Naive thymus-derived CD4-positive, alpha-beta T cell (primary cell): ENCODE measurements at regions of chr9 and their contacts with region 1.

Region 1: DNA sequence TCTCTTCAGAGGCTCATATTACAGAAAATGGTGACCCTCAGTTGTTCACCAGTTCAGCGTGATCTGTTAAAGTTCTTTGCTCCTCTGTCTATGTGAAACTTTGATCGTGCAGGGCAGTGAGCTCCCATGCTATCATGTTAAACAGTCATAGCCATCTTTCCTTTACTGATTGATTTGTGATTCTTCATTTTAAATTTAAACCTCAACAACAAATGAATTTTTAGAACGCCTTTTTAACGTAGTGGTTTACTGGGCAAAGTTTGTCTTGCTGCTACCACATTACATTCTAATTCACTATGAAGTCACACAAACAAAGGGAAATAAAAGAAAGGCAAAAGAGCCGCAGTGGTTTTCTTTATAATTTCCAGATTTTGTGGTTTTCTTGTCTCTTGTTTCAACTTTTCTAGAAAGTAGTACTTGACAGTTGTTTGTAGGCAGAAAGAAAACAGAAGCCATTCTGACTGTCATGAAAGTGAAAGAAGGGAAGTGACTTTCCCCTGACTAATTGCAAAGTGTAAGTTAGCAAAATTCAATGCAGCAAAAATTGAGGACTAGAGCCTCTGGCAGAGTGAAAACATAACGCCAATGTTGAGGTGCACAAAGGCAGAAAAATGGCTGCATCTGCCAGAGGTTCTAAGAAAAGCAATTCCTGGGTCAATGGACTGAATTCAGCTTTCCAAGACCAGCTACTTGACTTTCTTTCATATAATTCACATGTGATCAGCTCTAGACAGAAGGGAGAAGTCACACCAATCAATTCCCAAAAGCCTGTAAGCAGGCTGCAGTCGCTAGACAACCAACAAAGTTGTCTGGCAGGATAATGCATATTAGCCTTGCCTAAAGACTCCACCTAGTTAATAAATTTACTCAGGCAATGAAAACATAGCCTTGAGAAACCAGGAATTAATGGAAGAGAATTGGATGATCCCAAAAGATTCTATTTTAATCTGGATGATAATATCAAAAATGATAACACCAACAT is 7.1 kb upstream of the IFNA6 start:
- DNase-seq: peak in 6 of 9 donors; percentile 30 to 64 (median 48)
- ATAC-seq: peak; percentile 72
- H3K4me3 ChIP-seq: peak overlapping the region; percentile 18
- H3K4me3 Mint-ChIP-seq: peak overlapping the region; percentile 31 to 79 (median 72)
- H3K27ac ChIP-seq: peak overlapping the region; percentile 68
- H3K27ac Mint-ChIP-seq: peak overlapping the region; percentile 75 to 95 (median 88)
- H3K4me1 ChIP-seq: peaks cover 3 to 6% of the 10 kb centered on the region in 2 donors
- H3K4me1 Mint-ChIP-seq: peaks cover 4 to 27% (median 18%) of the 10 kb centered on the region in 7 donors
- H3K27me3 ChIP-seq: no peaks in the 10 kb centered on the region
- H3K27me3 Mint-ChIP-seq: peaks cover 0 to 67% (median 6%) of the 10 kb centered on the region in 5 donors

Region 2: GRCh38 chr9:21381448-21382339 is 23.9 kb after region 1 on chr9:
- CTCF ChIA-PET with region 1: no interaction called
- POLR2A ChIA-PET with region 1: no interaction called
- intact Hi-C with region 1: loop called (anchors 2 kb)
- DNase-seq: no peak
- ATAC-seq: peak; percentile 87
- H3K4me3 ChIP-seq: no peak overlapping the region
- H3K4me3 Mint-ChIP-seq: peak overlapping the region in 4 of 10 donors; percentile 10 to 45 (median 26)
- H3K27ac ChIP-seq: no peak overlapping the region
- H3K27ac Mint-ChIP-seq: peak overlapping the region in 1 of 9 donors; percentile 6
- H3K4me1 ChIP-seq: no peaks in the 10 kb centered on the region
- H3K4me1 Mint-ChIP-seq: peaks cover 0 to 17% (median 6%) of the 10 kb centered on the region in 7 donors
- H3K27me3 ChIP-seq: no peaks in the 10 kb centered on the region
- H3K27me3 Mint-ChIP-seq: peaks cover 26 to 65% (median 38%) of the 10 kb centered on the region in 5 donors

Region 3: DNA sequence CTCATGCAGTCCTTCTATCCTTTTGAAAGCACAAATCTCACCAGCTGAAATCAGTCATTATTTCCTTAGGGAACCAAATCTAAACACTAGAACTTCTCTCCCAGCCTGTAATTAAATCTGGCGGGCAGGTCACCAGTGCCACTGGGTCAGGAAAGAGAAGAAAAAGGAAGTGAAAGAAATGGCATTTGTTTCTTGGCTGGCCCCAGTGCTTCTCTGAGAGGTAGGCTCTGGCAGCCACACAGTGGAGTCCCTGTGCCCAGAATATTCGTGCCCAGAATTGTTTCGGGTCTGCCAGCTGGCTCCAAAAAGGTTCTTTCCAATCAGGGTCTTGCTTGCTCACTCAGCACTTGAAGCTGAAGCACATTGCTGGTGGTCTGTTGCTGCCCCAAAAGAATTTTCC is 310.7 kb after region 1 on chr9:
- CTCF ChIA-PET with region 1: no interaction called
- POLR2A ChIA-PET with region 1: no interaction called
- intact Hi-C with region 1: no loop called
- DNase-seq: no peak
- ATAC-seq: no peak
- H3K4me3 ChIP-seq: no peak overlapping the region
- H3K4me3 Mint-ChIP-seq: no peak overlapping the region
- H3K27ac ChIP-seq: no peak overlapping the region
- H3K27ac Mint-ChIP-seq: no peak overlapping the region
- H3K4me1 ChIP-seq: peaks cover 0 to 8% of the 10 kb centered on the region in 2 donors
- H3K4me1 Mint-ChIP-seq: peaks cover 4 to 28% (median 18%) of the 10 kb centered on the region in 7 donors
- H3K27me3 ChIP-seq: peaks cover 0 to 4% of the 10 kb centered on the region in 2 donors
- H3K27me3 Mint-ChIP-seq: no peaks in the 10 kb centered on the region